ENCODE measurements at regions of chr17 and their contacts with region 1.

Region 1: DNA sequence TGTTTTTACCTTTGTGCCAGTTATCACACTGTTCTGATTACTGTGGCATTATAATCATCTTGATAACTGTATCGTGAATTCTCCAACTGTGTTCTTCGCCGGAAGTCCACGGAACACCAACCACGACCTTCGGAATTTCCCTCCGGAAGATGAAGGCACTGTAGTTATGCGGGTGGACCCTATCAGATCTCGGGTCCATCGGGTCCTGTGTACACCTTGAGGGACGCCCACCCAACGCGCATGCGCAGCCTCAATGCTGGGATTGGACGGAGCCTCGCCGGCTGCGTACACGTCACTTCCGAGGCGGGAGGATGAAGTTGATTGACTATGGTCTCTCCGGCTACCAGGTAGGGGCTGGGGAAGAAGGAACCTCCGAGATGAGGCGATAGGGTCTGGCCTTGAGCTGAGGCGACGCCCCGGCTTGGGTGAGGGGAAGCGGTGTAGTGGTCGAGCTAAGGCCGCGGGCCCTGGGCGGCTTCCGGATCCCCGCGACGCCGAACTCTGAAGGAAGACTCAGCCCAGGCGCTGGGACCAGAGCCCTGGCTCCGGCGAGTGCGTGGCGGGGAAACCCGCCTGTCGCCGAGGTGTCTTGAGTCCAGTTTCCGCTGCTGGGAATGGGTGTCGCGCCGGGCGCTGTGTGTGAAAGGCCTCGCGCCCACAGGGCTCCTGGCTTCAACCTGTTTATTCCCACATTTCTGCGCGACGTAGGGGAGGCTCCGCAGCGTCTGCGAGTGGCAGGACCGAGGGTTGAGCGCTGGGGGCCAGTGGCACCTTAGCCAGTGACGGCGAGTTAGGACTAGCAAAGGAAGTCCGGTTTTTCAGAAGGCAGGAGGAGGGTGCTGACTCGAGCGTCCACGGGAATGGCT is at the start of gene DHRS7B:
- DNase-seq: peak; percentile 92 to 97
- H3K4me3 ChIP-seq: peak within 1 kb of the TSS; percentile 93
- H3K27ac ChIP-seq: peak within 1 kb of the TSS; percentile 57
- H3K4me1 ChIP-seq: peaks cover 12% of the 10 kb centered on the region
- H3K27me3 ChIP-seq: no peaks in the 10 kb centered on the region
- CTCF ChIP-seq: no peak
- total RNA-seq, gene DHRS7B: 27.9 and 30.1 TPM in 2 replicates

Region 2: DNA sequence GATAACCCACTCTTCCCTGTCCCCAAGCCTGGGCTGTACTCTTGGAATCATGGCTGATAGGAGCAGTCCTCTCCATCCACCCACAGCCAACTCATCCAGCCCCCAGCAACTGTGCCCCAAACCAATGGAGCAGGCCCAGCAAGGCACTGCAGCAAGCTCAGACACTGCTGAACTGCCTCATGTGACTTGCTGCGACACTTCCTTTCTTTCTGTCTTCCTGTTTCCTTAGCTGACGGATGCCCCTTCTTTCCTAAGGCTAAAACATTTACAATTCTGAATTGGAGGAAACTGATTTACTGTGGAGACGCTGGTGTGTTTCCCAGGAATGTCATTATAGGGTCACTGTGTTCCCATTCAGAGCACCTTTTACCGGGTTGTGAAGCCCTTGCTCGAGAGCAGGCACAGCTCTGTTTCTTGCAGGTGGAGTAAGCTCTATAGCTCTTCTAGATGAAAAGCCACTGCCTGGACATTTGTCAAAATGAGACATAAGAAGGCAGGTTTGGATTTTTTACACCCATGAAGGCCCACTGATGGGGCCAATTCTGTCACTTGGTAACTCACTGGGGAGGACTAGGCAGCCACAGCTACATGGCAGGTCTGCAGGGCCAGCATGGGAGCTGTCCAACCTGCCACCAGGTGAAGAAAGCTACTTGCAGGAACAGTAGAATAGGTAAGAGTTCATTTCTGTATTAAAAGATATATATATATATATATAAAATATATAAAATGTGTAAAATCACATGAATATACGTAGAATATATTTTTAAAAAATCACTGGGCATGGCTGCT is 59.7 kb after region 1 on chr17:
- CTCF ChIA-PET with region 1: no interaction called
- POLR2A ChIA-PET with region 1: no interaction called
- intact Hi-C with region 1: no loop called
- DNase-seq: no peak
- H3K4me3 ChIP-seq: no peak overlapping the region
- H3K27ac ChIP-seq: no peak overlapping the region
- H3K4me1 ChIP-seq: no peaks in the 10 kb centered on the region
- H3K27me3 ChIP-seq: no peaks in the 10 kb centered on the region
- CTCF ChIP-seq: no peak

Region 3: GRCh38 chr17:21199299-21199698 is 72.4 kb after region 1 on chr17:
- CTCF ChIA-PET with region 1: interaction called, 3 read pairs
- POLR2A ChIA-PET with region 1: interaction called, 21 read pairs
- intact Hi-C with region 1: no loop called
- DNase-seq: no peak
- H3K4me3 ChIP-seq: no peak overlapping the region
- H3K27ac ChIP-seq: no peak overlapping the region
- H3K4me1 ChIP-seq: no peaks in the 10 kb centered on the region
- H3K27me3 ChIP-seq: no peaks in the 10 kb centered on the region
- CTCF ChIP-seq: no peak

Region 4: DNA sequence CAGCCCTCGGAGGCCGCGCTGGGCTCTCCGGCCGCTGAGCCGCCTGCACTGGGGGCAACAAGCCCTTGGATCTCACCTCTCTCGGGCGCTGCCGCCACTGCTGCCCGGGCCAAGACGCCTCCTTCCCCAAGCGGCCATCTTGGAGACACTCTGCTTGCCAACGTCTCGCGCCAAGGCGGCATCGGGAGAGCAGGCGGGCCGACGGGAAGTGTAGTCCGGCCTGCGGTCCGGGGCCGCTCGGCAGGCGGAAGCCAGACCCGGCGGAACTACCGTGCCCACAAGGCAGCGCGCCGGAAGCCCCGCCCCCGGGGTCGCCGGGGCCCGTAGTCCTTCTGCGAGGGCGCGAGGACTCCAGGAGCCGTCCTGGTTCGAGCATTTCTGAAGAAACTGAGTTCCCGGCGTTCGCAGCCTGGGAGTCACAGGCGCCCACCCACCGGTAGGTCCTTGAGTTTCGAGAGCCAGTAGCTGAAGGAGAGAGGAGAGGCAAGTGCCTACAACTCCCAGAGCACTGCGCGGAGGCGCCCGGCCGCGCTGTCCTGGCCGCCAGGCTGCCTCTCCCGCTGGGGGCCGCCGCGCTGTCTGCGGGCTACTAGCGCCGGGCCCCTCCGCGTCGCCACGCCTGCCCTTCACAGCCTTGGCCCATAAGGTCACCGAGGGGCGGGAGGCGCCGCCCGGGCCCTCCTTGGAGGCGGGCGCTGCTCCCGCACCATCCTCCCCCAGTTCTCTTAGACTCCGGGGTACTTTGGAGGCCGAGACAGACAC is 87.3 kb after region 1 on chr17 and contains the start of gene TMEM11:
- CTCF ChIA-PET with region 1: interaction called, 4 read pairs
- POLR2A ChIA-PET with region 1: no interaction called
- intact Hi-C with region 1: loop called (anchors 2 kb)
- DNase-seq: peak; percentile 86 to 97
- H3K4me3 ChIP-seq: peak within 1 kb of the TSS; percentile 97
- H3K27ac ChIP-seq: peak within 1 kb of the TSS; percentile 81
- H3K4me1 ChIP-seq: peaks cover 32% of the 10 kb centered on the region
- H3K27me3 ChIP-seq: no peaks in the 10 kb centered on the region
- CTCF ChIP-seq: no peak
- total RNA-seq, gene TMEM11: 34.2 and 37.6 TPM in 2 replicates

Region 5: DNA sequence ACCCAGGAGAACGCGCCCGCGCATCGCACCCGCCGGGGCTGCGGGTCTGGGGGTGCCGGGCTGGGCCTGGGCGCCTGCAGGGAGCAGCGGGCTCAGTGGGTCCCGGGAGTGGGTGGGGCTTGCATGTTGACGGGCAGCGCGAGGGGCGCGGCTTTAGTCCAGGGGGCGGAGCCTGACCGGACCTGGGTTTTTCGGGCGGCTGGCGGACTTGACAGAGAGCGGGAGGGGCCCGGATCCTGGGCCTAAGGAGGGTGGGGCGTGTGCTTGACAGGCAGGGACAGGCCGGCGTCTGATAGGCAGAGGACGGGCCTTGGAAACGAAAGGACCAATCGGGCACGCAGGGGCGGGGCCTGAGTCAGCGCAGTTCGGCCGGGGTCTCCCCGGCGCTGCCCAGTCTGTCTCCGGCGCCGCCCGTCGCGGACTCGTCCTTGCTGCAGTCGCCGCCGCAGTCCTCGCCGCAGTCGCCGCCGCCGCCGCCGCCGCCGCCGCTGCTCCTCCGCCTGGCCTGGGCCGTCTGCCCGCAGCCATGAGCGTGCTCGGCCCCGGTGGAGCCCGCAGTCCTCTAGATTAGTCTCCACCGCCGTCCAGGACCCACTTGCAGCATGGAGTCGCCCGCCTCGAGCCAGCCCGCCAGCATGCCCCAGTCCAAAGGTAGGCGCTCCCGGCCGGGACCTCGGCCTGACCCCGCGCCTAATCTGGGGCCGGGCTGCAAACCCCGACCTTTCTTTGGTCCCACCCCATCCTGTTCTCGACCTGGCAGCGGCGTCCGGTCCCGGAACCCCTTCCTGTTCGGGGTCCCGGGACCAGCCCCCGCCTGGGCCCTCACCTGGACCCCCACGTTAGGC is 157.7 kb after region 1 on chr17 and contains the start of gene MAP2K3:
- CTCF ChIA-PET with region 1: no interaction called
- POLR2A ChIA-PET with region 1: interaction called, 4 read pairs
- intact Hi-C with region 1: loop called (anchors 5 kb)
- DNase-seq: peak; percentile 96 to 100
- H3K4me3 ChIP-seq: peak within 1 kb of the TSS; percentile 76
- H3K27ac ChIP-seq: peak within 1 kb of the TSS; percentile 96
- H3K4me1 ChIP-seq: peaks cover 46% of the 10 kb centered on the region
- H3K27me3 ChIP-seq: no peaks in the 10 kb centered on the region
- CTCF ChIP-seq: no peak
- total RNA-seq, gene MAP2K3: 89.2 and 98.1 TPM in 2 replicates

Region 6: DNA sequence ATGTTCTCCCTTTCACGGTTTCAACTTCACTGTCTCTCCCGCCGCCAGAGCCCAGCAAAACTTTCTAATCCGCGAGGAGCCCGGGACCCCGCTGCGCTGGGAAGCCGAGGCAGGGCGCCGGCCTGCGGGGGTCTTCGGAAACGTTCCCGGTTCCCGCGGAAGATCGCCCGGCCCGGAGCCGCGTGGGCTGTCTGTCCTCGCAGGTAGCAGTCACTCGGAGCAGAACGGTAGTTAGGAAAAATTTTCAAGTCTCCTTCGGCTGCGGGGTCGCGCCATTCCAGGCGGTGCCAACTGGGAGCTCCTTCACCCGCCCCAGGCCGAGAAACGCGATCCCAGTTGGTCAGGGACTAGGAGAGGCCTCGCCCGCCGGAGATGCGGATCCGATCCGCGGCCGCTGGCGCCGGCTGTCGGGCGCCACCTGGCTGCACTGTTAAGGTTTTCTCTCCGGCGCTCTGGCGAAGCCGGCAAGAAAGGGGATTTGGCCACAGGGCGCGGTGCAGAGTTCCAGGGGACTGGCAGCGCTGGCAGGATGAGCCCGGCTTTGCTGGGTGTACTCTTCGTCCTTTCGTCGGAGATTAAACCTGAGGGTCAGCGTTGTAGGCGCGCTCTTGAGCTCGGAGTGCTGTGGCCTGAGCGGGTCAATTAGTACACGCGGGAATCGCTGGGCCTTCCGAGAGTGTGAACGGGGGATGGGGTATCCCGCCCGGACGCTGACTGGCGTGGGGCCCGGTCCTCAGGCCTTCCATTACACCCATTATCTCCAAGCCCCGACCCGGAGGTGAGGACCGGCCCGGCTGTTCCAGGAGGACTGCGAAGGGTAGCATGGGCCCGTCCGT is 384.7 kb after region 1 on chr17:
- CTCF ChIA-PET with region 1: interaction called, 3 read pairs
- POLR2A ChIA-PET with region 1: no interaction called
- intact Hi-C with region 1: loop called (anchors 1 kb)
- DNase-seq: peak; percentile 38 to 67
- H3K4me3 ChIP-seq: no peak overlapping the region
- H3K27ac ChIP-seq: no peak overlapping the region
- H3K4me1 ChIP-seq: 0 out of 2 replicates have a peak, but pooled peaks cover 3% of the 10 kb centered on the region
- H3K27me3 ChIP-seq: peaks cover 25% of the 10 kb centered on the region
- CTCF ChIP-seq: peak; percentile 75

Measured in PC-9 (cell line).